CD4-positive, alpha-beta memory T cell (primary cell): ENCODE measurements at regions of chr19 and their contacts with region 1.

Region 1: DNA sequence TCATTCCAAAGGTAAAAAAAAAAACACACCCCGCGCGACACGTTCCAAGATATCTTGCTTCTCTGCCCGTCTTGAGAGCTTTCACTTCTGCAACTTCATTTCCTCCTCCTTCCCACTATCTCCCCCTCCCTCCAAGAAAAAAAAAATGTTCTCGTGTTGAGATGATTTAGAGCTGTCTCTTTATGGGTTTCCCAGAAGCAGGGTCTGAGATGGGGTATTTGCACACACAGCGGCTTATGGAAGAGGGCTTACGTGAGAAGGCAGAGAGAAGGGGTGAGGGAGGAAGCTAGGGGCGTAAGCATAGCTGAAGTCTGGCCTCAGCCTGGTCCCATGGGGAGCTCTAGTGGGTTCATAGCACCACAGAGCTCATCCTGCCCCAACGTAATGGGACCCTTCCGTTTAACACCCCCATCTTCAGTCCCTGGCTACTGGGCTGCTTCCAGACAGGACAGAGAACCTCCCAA is 31.3 kb upstream of the USE1 start:
- DNase-seq: peak in 4 of 5 donors; percentile 24 to 35 (median 31)
- H3K4me3 ChIP-seq: peak overlapping the region; percentile 5 to 43
- H3K4me3 Mint-ChIP-seq: peak overlapping the region; percentile 86 to 92 (median 90)
- H3K27ac ChIP-seq: peak overlapping the region; percentile 58
- H3K27ac Mint-ChIP-seq: peak overlapping the region; percentile 82 to 98 (median 96)
- H3K4me1 ChIP-seq: peaks cover 22% of the 10 kb centered on the region
- H3K4me1 Mint-ChIP-seq: peaks cover 16 to 27% (median 19%) of the 10 kb centered on the region in 4 donors
- H3K27me3 ChIP-seq: no peaks in the 10 kb centered on the region
- H3K27me3 Mint-ChIP-seq: no peaks in the 10 kb centered on the region

Region 2: GRCh38 chr19:17125715-17126677 is 57.9 kb before region 1 on chr19:
- CTCF ChIA-PET with region 1: interaction called, 4 read pairs
- POLR2A ChIA-PET with region 1: interaction called, 52 read pairs
- intact Hi-C with region 1: loop called (anchors 2 kb)
- DNase-seq: peak; percentile 82 to 91 (median 87)
- H3K4me3 ChIP-seq: peak overlapping the region; percentile 51 to 73
- H3K4me3 Mint-ChIP-seq: peak overlapping the region; percentile 79 to 93 (median 91)
- H3K27ac ChIP-seq: peak overlapping the region; percentile 76
- H3K27ac Mint-ChIP-seq: peak overlapping the region; percentile 97 to 99 (median 99)
- H3K4me1 ChIP-seq: peaks cover 52% of the 10 kb centered on the region
- H3K4me1 Mint-ChIP-seq: peaks cover 23 to 61% (median 40%) of the 10 kb centered on the region in 4 donors
- H3K27me3 ChIP-seq: no peaks in the 10 kb centered on the region
- H3K27me3 Mint-ChIP-seq: no peaks in the 10 kb centered on the region

Region 3: GRCh38 chr19:17156927-17157302 is 27.0 kb before region 1 on chr19:
- CTCF ChIA-PET with region 1: no interaction called
- POLR2A ChIA-PET with region 1: no interaction called
- intact Hi-C with region 1: no loop called
- DNase-seq: no peak
- H3K4me3 ChIP-seq: no peak overlapping the region
- H3K4me3 Mint-ChIP-seq: no peak overlapping the region
- H3K27ac ChIP-seq: no peak overlapping the region
- H3K27ac Mint-ChIP-seq: peak overlapping the region in 1 of 7 donors; percentile 64
- H3K4me1 ChIP-seq: no peaks in the 10 kb centered on the region
- H3K4me1 Mint-ChIP-seq: peaks cover 0 to 4% (median 1%) of the 10 kb centered on the region in 4 donors
- H3K27me3 ChIP-seq: no peaks in the 10 kb centered on the region
- H3K27me3 Mint-ChIP-seq: no peaks in the 10 kb centered on the region

Region 4: GRCh38 chr19:17226002-17226933 is 42.4 kb after region 1 on chr19 and contains the start of gene OCEL1:
- CTCF ChIA-PET with region 1: interaction called, 7 read pairs
- POLR2A ChIA-PET with region 1: interaction called, 15 read pairs
- intact Hi-C with region 1: no loop called
- DNase-seq: peak; percentile 96 to 98 (median 97)
- H3K4me3 ChIP-seq: peak within 1 kb of the TSS; percentile 73 to 90
- H3K4me3 Mint-ChIP-seq: peak within 1 kb of the TSS; percentile 95 to 99 (median 95)
- H3K27ac ChIP-seq: peak within 1 kb of the TSS; percentile 73
- H3K27ac Mint-ChIP-seq: peak within 1 kb of the TSS; percentile 98 to 99 (median 98)
- H3K4me1 ChIP-seq: peaks cover 14% of the 10 kb centered on the region
- H3K4me1 Mint-ChIP-seq: peaks cover 4 to 19% (median 7%) of the 10 kb centered on the region in 4 donors
- H3K27me3 ChIP-seq: no peaks in the 10 kb centered on the region
- H3K27me3 Mint-ChIP-seq: no peaks in the 10 kb centered on the region
- total RNA-seq, gene OCEL1: 23.9 to 29.3 TPM

Region 5: GRCh38 chr19:17235618-17236377 is 51.9 kb after region 1 on chr19:
- CTCF ChIA-PET with region 1: interaction called, 8 read pairs
- POLR2A ChIA-PET with region 1: interaction called, 23 read pairs
- intact Hi-C with region 1: loop called (anchors 1 kb)
- DNase-seq: peak; percentile 71 to 77 (median 73)
- H3K4me3 ChIP-seq: peak overlapping the region; percentile 69 to 84
- H3K4me3 Mint-ChIP-seq: peak overlapping the region; percentile 70 to 85 (median 78)
- H3K27ac ChIP-seq: peak overlapping the region; percentile 40
- H3K27ac Mint-ChIP-seq: peak overlapping the region in 1 of 7 donors; percentile 64
- H3K4me1 ChIP-seq: peaks cover 20% of the 10 kb centered on the region
- H3K4me1 Mint-ChIP-seq: peaks cover 2 to 28% (median 6%) of the 10 kb centered on the region in 4 donors
- H3K27me3 ChIP-seq: no peaks in the 10 kb centered on the region
- H3K27me3 Mint-ChIP-seq: no peaks in the 10 kb centered on the region

Region 6: DNA sequence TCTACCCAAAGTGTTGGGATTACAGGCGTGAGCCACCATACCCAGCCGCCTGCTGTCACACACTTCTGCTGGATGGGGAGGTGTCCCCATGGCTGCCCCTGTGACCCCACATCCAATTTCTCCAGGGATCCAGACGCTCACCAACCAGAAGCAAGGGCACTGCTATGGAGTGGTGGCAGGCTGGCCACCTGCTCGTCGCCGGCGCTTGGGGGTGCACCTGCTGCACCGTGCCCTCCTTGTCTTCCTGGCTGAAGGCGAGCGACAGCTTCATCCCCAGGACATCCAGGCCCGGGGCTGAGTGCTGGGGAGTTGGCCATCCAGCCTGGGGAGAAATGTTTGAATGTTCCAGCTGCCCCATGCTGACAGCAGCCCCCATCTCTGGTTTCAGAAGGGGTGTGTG is 102.4 kb after region 1 on chr19:
- CTCF ChIA-PET with region 1: no interaction called
- POLR2A ChIA-PET with region 1: no interaction called
- intact Hi-C with region 1: no loop called
- DNase-seq: no peak
- H3K4me3 ChIP-seq: no peak overlapping the region
- H3K4me3 Mint-ChIP-seq: no peak overlapping the region
- H3K27ac ChIP-seq: no peak overlapping the region
- H3K27ac Mint-ChIP-seq: no peak overlapping the region
- H3K4me1 ChIP-seq: peaks cover 15% of the 10 kb centered on the region
- H3K4me1 Mint-ChIP-seq: peaks cover 2 to 4% (median 3%) of the 10 kb centered on the region in 4 donors
- H3K27me3 ChIP-seq: no peaks in the 10 kb centered on the region
- H3K27me3 Mint-ChIP-seq: peaks cover 0 to 4% of the 10 kb centered on the region in 2 donors